ENCODE measurements at regions of chr10 and their contacts with region 1.

Region 1: DNA sequence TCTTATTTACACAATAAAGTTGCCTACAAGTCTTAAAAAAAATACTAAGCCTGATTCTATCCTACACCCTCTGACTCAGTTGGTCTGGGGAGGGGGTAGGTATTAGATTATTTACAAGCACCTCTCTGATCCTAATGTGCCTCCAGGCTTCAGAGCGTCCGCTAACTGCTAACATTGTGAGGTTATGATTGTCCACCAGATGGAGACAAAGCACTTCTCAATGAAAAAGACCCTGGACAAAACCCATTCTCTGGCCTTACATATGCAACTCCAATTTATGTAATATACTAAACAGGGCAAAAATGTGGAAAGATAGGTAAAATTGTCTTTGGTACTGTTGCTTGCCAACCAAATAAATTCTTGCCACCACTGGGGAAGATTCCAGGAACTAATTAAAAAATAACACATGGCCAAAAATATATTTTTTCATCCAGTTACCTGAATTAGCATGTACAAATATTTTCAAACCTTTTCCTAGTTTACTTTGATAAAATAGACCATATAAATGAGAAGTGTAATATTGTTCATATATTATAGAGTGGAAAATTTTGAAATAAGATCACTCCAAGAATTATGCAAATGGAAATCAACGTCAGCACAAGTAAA is 92.4 kb downstream of the KIF20B start:
- DNase-seq: peak; percentile 59
- H3K4me3 ChIP-seq: no peak overlapping the region
- H3K27ac ChIP-seq: no peak overlapping the region
- H3K4me1 ChIP-seq: peaks cover 21% of the 10 kb centered on the region
- H3K27me3 ChIP-seq: no peaks in the 10 kb centered on the region
- CTCF ChIP-seq: peak; percentile 69 to 78

Region 2: DNA sequence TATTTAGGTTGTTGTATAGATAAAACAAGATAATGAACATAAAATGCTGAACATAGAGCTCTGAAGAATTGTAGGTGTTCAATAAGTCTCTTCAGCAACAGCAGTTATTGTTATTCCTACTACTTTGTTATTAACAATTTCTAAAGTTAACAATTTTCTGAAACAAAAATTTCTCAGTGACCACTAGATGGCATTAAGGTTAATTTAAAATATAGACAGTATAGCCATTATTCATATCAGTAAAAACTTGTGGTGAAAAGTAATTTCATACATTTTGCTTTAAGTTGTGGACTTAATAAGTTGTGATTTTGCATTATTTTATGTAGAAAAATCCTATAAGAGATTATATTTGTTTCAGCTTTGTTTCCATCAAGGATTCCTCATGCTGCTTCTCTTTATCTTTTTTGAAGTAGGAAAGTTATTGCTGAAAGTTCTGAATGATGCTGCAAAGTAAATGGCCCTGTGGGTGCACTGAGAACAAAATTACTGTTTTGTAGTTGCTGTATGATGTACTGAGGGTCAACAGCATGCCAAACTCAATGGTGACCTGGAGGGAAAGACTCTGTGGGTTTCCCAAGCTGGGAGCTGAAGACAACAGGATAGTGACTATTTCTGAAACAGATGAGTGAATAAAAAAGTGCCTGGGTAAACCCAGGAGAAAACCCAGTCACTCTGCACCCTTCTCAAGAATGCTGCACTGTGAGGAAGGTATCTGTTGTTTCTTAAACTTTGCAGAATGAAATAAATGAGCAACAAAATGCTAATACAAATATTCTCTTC is 161.2 kb after region 1 on chr10:
- CTCF ChIA-PET with region 1: no interaction called
- dilution Hi-C with region 1: no loop called
- in situ Hi-C with region 1: no loop called
- intact Hi-C with region 1: loop called (anchors 1 kb)
- DNase-seq: no peak
- H3K4me3 ChIP-seq: no peak overlapping the region
- H3K27ac ChIP-seq: no peak overlapping the region
- H3K4me1 ChIP-seq: no peaks in the 10 kb centered on the region
- H3K27me3 ChIP-seq: no peaks in the 10 kb centered on the region
- CTCF ChIP-seq: peak; percentile 30 to 39

Region 3: DNA sequence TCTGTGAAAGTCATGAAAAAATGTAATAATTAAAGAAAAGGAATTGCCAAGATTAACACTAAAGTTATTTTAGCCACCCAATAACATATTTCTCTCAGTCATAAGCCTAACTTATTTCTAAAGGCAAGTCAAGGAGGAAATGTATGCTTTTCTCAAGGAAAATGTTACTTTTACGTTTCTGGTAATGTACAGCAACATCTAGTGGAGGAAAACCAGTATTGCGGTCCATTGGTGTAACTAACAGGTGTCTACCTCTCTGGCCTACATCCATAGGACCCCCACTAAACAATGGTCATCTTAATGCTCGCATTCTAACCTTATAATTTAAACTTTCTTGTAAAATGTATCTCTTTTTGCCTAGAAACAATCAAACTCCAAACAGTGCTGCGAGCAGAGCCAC is 345.1 kb after region 1 on chr10:
- CTCF ChIA-PET with region 1: no interaction called
- dilution Hi-C with region 1: loop called (anchors 25 kb)
- in situ Hi-C with region 1: loop called in 1 of 2 experiments (anchors 5 kb)
- intact Hi-C with region 1: loop called (anchors 1 kb)
- DNase-seq: no peak
- H3K4me3 ChIP-seq: no peak overlapping the region
- H3K27ac ChIP-seq: no peak overlapping the region
- H3K4me1 ChIP-seq: no peaks in the 10 kb centered on the region
- H3K27me3 ChIP-seq: no peaks in the 10 kb centered on the region
- CTCF ChIP-seq: peak; percentile 52 to 53

Region 4: DNA sequence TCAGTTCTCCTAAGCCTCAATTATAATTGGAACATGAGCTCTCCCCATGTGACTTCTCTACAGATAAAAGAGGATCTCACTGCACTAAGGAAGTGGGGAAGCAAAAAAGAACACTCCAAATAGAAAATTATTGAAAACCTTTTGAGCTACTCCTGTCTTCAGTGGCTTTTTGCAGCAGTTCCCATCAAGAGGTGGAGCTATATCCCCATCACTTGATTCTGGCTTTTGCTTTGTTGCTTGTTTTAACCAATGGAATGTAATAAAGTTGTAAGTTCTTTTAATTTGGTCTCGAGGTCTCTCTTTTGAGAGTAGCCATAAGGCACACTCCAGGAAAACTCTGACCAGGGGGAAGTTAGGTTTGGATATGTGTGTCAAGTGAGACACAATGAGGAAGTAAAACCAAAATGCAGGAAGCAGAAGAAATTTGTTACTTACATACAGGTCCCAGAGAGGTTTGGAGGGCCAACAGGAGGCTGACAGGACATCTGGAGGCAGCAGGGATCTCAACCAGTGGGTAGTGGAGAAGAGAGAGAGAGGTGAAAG is 494.7 kb after region 1 on chr10:
- CTCF ChIA-PET with region 1: no interaction called
- dilution Hi-C with region 1: no loop called
- in situ Hi-C with region 1: no loop called
- intact Hi-C with region 1: loop called (anchors 5 kb)
- DNase-seq: peak; percentile 29
- H3K4me3 ChIP-seq: no peak overlapping the region
- H3K27ac ChIP-seq: no peak overlapping the region
- H3K4me1 ChIP-seq: peaks cover 8% of the 10 kb centered on the region
- H3K27me3 ChIP-seq: no peaks in the 10 kb centered on the region
- CTCF ChIP-seq: peak; percentile 29 to 56

Region 5: DNA sequence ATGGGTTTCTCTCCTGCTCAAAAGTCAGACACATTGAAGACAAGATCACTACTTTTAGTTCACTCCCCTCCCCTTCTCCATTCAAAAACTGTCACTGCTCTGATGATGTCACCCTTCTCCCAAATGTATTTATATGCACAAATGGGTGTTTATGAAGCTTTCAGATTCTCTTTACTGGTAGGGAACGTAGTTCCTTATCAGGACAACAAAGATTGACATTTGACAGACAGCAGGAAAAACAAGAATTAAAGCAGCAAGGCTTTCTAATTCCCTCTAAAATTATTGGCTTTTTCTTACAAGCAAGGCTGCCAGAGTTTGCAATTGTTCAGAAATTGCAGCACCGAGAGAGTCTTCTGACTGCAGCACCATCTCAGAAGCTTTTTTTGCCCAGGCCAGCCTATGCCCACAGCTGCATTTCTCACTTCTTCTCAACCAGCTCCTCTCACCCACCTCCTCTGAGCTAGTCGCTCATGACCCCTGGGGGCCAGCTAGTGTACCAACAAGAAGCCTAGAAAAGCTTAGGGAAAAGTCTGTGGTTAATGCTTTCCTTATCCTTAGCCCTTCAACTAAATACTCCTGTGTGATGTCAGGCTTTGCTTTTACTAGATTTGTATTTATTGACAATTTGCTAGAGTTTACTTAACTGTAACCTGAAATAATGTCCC is 799.0 kb after region 1 on chr10:
- CTCF ChIA-PET with region 1: no interaction called
- dilution Hi-C with region 1: no loop called
- in situ Hi-C with region 1: no loop called
- intact Hi-C with region 1: loop called (anchors 1 kb)
- DNase-seq: peak; percentile 62
- H3K4me3 ChIP-seq: no peak overlapping the region
- H3K27ac ChIP-seq: no peak overlapping the region
- H3K4me1 ChIP-seq: peaks cover 4% of the 10 kb centered on the region
- H3K27me3 ChIP-seq: no peaks in the 10 kb centered on the region
- CTCF ChIP-seq: peak; percentile 63 to 79

Region 6: DNA sequence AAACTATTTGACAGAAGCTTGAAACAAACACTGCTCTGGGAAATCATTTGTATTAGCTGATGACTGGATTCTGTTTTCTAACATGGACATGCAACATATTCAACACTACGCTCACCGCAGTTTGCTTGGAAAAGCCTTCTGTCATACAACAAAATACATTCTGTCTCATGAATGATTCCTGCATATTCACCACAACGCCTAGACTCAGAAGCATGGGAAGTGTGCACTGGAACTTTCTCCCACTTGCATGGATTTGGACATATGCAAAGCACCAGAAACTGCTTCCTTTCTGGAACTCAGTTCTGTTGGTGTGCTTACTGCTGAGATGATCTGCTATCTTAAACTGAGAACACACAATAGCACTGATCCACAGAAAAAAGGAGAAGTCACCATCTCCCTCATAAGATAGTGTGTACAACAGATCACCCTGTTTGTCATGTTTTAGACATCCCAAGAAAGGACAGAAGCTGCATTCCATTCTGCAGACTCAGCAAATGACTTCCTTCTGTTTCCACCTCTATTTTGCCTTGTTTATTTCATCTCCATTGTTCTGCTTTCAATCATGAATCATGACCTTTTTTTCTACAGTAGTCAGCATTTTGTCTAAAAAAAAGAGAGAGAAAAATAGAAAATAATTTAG is 948.3 kb after region 1 on chr10:
- CTCF ChIA-PET with region 1: no interaction called
- dilution Hi-C with region 1: no loop called
- in situ Hi-C with region 1: loop called in 1 of 2 experiments (anchors 25 kb)
- intact Hi-C with region 1: no loop called
- DNase-seq: peak; percentile 43
- H3K4me3 ChIP-seq: no peak overlapping the region
- H3K27ac ChIP-seq: no peak overlapping the region
- H3K4me1 ChIP-seq: peaks cover 23% of the 10 kb centered on the region
- H3K27me3 ChIP-seq: no peaks in the 10 kb centered on the region
- CTCF ChIP-seq: no peak

Region 7: GRCh38 chr10:90862908-90863514 is 1069.3 kb after region 1 on chr10:
- CTCF ChIA-PET with region 1: no interaction called
- dilution Hi-C with region 1: no loop called
- in situ Hi-C with region 1: loop called (anchors 10 kb)
- intact Hi-C with region 1: loop called (anchors 1 kb)
- DNase-seq: peak; percentile 35
- H3K4me3 ChIP-seq: no peak overlapping the region
- H3K27ac ChIP-seq: no peak overlapping the region
- H3K4me1 ChIP-seq: peaks cover 16% of the 10 kb centered on the region
- H3K27me3 ChIP-seq: no peaks in the 10 kb centered on the region
- CTCF ChIP-seq: peak; percentile 81 to 93